ENCODE measurements at regions of chr1 and their contacts with region 1.

Region 1: GRCh38 chr1:217630711-217631591 is at the starts of genes GPATCH2 and SPATA17:
- DNase-seq: peak; percentile 82
- H3K4me3 Mint-ChIP-seq: peak within 1 kb of the TSS; percentile 88
- H3K27ac Mint-ChIP-seq: peak within 1 kb of the TSS; percentile 94
- H3K4me1 Mint-ChIP-seq: peaks cover 30% of the 10 kb centered on the region
- H3K27me3 Mint-ChIP-seq: no peaks in the 10 kb centered on the region
- total RNA-seq, gene GPATCH2: 8.2 to 10.2 TPM
- total RNA-seq, gene SPATA17: not detected

Region 2: GRCh38 chr1:217620814-217621213 is 10.1 kb before region 1 on chr1:
- CTCF ChIA-PET with region 1: interaction called, 10 read pairs
- POLR2A ChIA-PET with region 1: interaction called, 14 read pairs
- DNase-seq: no peak
- H3K4me3 Mint-ChIP-seq: no peak overlapping the region
- H3K27ac Mint-ChIP-seq: peak overlapping the region; percentile 9
- H3K4me1 Mint-ChIP-seq: peaks cover 14% of the 10 kb centered on the region
- H3K27me3 Mint-ChIP-seq: no peaks in the 10 kb centered on the region

Measured in activated CD4-positive, alpha-beta memory T cell treated with anti-CD3 and anti-CD28 coated beads, Interleukin-2, amount 10 ng/mL, durations not matched to agents 7 days and 5 days (primary cell).